GM13976 (cell line): ENCODE measurements at regions of chr19 and their contacts with region 1.

Region 1: DNA sequence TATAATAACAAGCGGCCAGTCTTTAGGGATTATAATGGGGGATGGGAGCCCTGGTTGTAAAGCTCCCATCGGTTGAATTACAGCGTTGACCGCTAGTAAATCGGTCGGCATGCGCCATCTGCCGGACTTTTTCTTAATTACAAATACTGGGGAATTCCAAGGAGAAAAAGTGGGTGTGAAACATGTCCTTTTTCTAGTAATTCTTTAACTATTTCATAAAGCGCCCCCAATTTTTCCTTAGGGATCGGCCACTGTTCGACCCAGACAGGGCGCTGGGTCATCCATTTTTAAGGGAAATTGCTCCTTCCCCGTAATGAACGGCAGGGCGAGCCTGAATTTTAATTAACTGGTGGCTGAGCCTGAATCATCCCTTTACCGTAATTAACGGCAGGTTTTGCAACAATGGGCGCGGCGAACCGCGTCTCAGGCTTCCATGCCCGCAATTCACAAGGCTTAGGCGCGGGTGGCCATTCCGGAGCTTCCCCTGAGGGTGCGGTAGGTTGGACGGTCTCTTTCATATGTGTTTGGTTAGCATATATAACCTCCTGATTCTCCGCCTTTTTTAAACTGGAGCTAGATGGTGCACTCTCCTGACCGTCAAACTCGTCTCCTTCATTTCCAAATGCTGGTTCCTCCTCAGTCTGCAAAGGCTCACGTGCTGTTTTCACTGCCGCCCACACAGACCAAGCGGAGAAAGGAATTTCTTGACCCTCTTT is 30.2 kb upstream of the EVI5L start:
- DNase-seq: peak; percentile 72
- CTCF ChIP-seq: peak; percentile 48

Region 2: DNA sequence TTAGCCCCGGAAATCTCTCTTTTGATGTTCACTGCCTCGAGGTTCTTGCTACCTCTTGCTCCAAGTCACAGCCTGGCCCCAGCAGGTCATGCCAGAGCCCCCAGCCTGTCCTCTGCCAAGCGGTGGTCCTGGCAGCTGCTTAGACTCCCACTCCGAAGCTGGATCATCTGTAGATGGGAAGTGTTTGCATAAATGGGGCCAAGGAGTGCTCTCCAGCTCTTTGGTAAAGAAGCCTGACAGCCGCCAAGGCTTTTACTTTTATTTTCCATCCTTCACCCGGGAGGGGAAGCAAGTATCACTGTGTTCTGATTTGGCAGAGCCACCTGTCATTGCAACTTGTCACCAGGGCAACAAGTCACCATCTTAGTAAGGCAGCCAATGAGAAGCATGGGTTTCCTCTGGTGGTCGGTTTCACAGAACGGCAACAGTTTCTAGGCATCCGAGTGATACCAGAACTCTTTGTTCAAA is 141.5 kb before region 1 on chr19:
- in situ Hi-C with region 1: no loop called
- DNase-seq: peak; percentile 95
- CTCF ChIP-seq: no peak

Region 3: GRCh38 chr19:7680606-7681339 is 119.0 kb before region 1 on chr19 and contains the start of gene TRAPPC5:
- in situ Hi-C with region 1: loop called (anchors 5 kb)
- DNase-seq: peak; percentile 91
- CTCF ChIP-seq: peak; percentile 99

Region 4: DNA sequence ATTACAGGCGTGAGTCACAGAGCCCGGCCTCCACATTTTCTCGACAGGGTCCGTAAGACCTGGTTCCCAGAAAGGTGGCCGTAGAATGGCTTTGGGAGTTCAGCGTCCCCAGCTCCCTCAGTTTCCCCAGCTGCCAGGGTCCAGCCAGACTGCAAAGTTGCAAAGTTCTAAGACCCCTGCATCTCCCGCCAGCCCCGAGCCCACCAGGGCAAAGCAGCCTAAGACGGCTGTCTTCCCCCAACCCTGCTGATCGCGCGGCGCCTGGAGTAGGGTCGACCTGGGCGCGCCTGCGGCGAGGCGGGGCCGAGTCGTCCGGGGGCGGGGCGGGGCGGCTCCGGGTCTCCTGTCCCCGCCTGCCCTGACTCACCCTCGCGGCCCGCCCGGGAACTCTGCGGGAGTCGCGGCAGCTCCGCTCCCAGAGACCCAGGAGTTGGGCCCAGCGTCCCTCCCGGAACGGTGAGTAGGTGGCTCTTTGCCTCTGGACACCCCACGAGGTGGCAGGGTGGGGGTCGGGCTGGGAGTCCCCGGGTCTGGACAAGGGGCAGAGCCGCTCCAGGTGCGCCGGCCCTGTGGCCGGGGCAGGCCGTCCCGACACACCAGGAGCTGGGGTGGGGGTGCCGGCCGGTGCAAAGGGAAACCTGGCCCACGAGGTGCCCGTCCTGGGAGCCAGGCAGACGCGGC is 88.5 kb after region 1 on chr19 and contains the start of gene LRRC8E:
- in situ Hi-C with region 1: no loop called
- DNase-seq: no peak
- CTCF ChIP-seq: no peak